ENCODE measurements at regions of chr12 and their contacts with region 1.

Region 1: GRCh38 chr12:810671-811415 is 58.5 kb downstream of the WNK1 start:
- DNase-seq: no peak
- H3K4me3 ChIP-seq: no peak overlapping the region
- H3K27ac ChIP-seq: no peak overlapping the region
- H3K4me1 ChIP-seq: no peaks in the 10 kb centered on the region
- H3K27me3 ChIP-seq: no peaks in the 10 kb centered on the region
- CTCF ChIP-seq: no peak

Region 2: DNA sequence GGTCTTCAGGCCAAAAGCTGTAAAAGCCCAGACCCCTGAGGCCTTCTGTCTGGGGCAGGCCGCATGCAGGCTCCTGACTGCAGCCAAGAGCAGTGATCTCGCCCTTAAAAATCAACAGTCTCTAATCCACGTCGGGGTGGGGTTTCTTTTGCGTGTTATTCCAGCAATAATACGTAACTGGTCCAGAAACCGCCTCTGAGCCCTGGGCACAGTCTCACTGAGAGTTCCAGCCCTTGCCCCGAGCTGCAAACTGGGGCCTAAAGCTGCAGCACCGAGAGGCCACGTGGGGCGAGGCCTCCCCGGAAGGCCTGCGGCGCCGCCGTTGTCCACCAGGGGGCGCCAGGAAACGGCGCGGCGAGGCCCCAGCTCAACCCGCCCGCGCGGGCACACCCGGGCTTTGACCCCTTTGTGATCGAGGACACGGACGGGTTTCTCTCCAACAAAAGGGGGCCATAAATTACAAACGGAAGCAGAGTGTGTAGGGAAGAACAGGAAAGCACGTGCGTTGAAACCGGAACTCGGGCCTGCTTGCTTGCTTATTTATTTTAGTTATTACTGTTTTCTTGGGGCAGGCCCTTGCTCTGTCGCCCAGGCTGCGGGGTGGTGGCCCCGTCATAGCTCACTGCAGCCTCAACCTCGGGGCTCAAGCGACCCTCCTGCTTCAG is 234.8 kb before region 1 on chr12:
- intact Hi-C with region 1: loop called (anchors 10 kb)
- DNase-seq: peak; percentile 78 to 92 (median 86)
- H3K4me3 ChIP-seq: peak overlapping the region in 1 of 3 donors; percentile 29
- H3K27ac ChIP-seq: no peak overlapping the region
- H3K4me1 ChIP-seq: peaks cover 0 to 6% (median 0%) of the 10 kb centered on the region in 3 donors
- H3K27me3 ChIP-seq: no peaks in the 10 kb centered on the region
- CTCF ChIP-seq: peak; percentile 96

Measured in kidney (tissue), 22 donors.